Astrocyte of the cerebellum (primary cell): ENCODE measurements at regions of chr12 and their contacts with region 1.

Region 1: GRCh38 chr12:109277899-109278762 is 31.0 kb downstream of the FOXN4 start:
- DNase-seq: no peak
- H3K4me3 ChIP-seq: no peak overlapping the region
- CTCF ChIP-seq: no peak

Region 2: GRCh38 chr12:109232731-109233130 is 45.4 kb before region 1 on chr12:
- in situ Hi-C with region 1: loop called (anchors 5 kb)
- DNase-seq: no peak
- H3K4me3 ChIP-seq: no peak overlapping the region
- CTCF ChIP-seq: no peak